AG04450 (cell line): ENCODE measurements at regions of chr4 and their contacts with region 1.

Region 1: GRCh38 chr4:177047070-177047850 is 254.5 kb upstream of the VEGFC start:
- DNase-seq: peak; percentile 59
- H3K4me3 ChIP-seq: no peak overlapping the region
- H3K27ac ChIP-seq: no peak overlapping the region
- H3K27me3 ChIP-seq: no peaks in the 10 kb centered on the region
- CTCF ChIP-seq: peak; percentile 88

Region 2: GRCh38 chr4:176377780-176378179 is 669.5 kb before region 1 on chr4:
- CTCF ChIA-PET with region 1: interaction called, 84 read pairs
- POLR2A ChIA-PET with region 1: no interaction called
- DNase-seq: no peak
- H3K4me3 ChIP-seq: no peak overlapping the region
- H3K27ac ChIP-seq: no peak overlapping the region
- H3K27me3 ChIP-seq: no peaks in the 10 kb centered on the region
- CTCF ChIP-seq: peak; percentile 56

Region 3: GRCh38 chr4:176760471-176760870 is 286.8 kb before region 1 on chr4:
- CTCF ChIA-PET with region 1: interaction called, 12 read pairs
- POLR2A ChIA-PET with region 1: no interaction called
- DNase-seq: no peak
- H3K4me3 ChIP-seq: no peak overlapping the region
- H3K27ac ChIP-seq: no peak overlapping the region
- H3K27me3 ChIP-seq: no peaks in the 10 kb centered on the region
- CTCF ChIP-seq: no peak

Region 4: GRCh38 chr4:176798540-176798939 is 248.7 kb before region 1 on chr4:
- CTCF ChIA-PET with region 1: interaction called, 32 read pairs
- POLR2A ChIA-PET with region 1: interaction called, 18 read pairs
- DNase-seq: no peak
- H3K4me3 ChIP-seq: no peak overlapping the region
- H3K27ac ChIP-seq: no peak overlapping the region
- H3K27me3 ChIP-seq: no peaks in the 10 kb centered on the region
- CTCF ChIP-seq: no peak

Region 5: DNA sequence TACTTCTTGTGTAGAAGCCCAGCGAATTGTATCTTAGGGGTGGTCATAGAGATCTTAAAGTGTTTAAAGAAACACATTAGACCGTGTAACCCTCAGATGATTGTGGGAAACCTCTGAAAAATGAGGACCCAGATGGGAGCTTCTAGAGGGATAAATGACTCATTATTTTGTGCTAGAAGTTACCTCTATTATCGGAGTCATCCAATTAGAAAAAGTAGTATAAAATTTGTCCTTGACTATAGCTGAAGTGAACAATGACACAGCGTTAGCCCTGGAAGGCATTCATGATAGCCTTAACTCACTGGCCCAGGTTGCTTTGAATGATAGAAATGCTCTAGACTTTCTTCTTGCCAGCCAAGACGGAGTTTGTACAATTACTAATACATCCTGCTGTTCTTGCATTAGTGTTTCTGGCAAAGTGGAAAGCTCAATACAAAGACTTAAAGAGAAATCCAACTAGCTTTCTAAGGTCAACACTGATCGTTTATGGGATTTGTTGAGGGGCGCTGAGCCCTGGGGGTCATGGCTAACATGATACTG is 75.6 kb before region 1 on chr4:
- CTCF ChIA-PET with region 1: interaction called, 10 read pairs
- POLR2A ChIA-PET with region 1: no interaction called
- DNase-seq: no peak
- H3K4me3 ChIP-seq: no peak overlapping the region
- H3K27ac ChIP-seq: no peak overlapping the region
- H3K27me3 ChIP-seq: no peaks in the 10 kb centered on the region
- CTCF ChIP-seq: no peak

Region 6: GRCh38 chr4:177033135-177033534 is 14.1 kb before region 1 on chr4:
- CTCF ChIA-PET with region 1: interaction called, 64 read pairs
- POLR2A ChIA-PET with region 1: no interaction called
- DNase-seq: no peak
- H3K4me3 ChIP-seq: no peak overlapping the region
- H3K27ac ChIP-seq: no peak overlapping the region
- H3K27me3 ChIP-seq: no peaks in the 10 kb centered on the region
- CTCF ChIP-seq: peak; percentile 16; the same call in 1 of the 2 replicates

Region 7: GRCh38 chr4:177339477-177340374 is 292.5 kb after region 1 on chr4:
- CTCF ChIA-PET with region 1: interaction called, 11 read pairs
- POLR2A ChIA-PET with region 1: interaction called, 3 read pairs
- DNase-seq: peak; percentile 8
- H3K4me3 ChIP-seq: no peak overlapping the region
- H3K27ac ChIP-seq: no peak overlapping the region
- H3K27me3 ChIP-seq: no peaks in the 10 kb centered on the region
- CTCF ChIP-seq: peak; percentile 81